Activated T-helper 1 cell treated with anti-CD3 and anti-CD28 coated beads, Interleukin-12 subunit alpha, Interleukin-12 subunit beta, Interleukin-2, Interleukin-4 antibody, amounts not matched to agents 30 ng/mL and 10 ng/mL and 1 ng/mL, durations not matched to agents 14 hours and 24 hours and 36 hours (primary cell): ENCODE measurements at regions of chr2 and their contacts with region 1.

Region 1: DNA sequence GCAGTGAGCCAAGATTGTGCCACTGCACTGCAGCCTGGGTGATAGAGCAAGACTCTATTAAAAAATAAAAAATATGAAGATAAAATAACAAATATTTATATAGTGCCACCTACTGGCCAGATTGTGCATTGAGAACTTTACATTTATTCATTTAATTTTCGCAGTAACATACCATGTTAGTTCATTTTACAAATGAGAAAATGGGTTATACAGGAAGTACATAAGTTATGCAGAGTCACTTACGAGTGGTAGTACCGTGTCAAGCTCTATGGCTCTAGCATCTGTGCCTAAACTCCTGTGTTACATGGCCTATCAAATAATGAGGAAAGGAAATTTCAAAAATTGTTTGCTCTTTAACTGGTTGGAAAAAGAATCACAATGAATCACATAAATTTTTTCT is 27.9 kb downstream of the RIF1 start:
- DNase-seq: no peak
- H3K4me3 Mint-ChIP-seq: no peak overlapping the region
- H3K27ac Mint-ChIP-seq: peak overlapping the region; percentile 29
- H3K4me1 Mint-ChIP-seq: peaks cover 19% of the 10 kb centered on the region
- H3K27me3 Mint-ChIP-seq: no peaks in the 10 kb centered on the region

Region 2: GRCh38 chr2:151261231-151261976 is 176.2 kb before region 1 on chr2 and contains the start of gene RBM43:
- intact Hi-C with region 1: loop called (anchors 2 kb)
- DNase-seq: peak; percentile 85
- H3K4me3 Mint-ChIP-seq: peak within 1 kb of the TSS; percentile 93
- H3K27ac Mint-ChIP-seq: peak within 1 kb of the TSS; percentile 98
- H3K4me1 Mint-ChIP-seq: peaks cover 18% of the 10 kb centered on the region
- H3K27me3 Mint-ChIP-seq: peaks cover 2% of the 10 kb centered on the region
- total RNA-seq, gene RBM43: 1.9 and 2.9 TPM in 2 replicates

Region 3: DNA sequence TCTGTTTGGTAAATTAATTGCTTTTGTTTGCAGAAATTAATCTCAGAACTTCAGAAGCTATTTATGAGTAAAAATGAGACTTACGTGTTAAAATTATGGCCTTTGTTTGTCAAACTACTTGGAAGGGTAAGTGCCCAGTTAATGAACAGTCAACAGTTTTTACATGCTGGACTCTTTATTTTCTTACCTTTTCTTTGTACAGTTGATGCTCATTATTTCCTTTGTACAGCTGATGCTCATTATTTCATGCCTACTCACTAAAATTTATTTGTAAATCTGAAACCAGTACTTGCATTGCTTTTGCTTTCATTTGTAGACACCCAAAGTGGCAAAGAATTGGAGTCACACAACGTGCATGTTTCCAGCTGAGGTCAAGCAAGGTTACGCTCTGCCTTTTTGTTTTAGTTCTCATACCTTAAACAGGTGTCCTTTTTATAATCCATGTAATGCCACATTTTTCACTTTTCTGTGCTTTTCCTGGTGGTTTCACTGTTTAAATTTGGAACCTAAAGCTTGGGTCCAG is 14.7 kb before region 1 on chr2:
- intact Hi-C with region 1: loop called (anchors 2 kb)
- DNase-seq: no peak
- H3K4me3 Mint-ChIP-seq: no peak overlapping the region
- H3K27ac Mint-ChIP-seq: peak overlapping the region; percentile 74
- H3K4me1 Mint-ChIP-seq: peaks cover 29% of the 10 kb centered on the region
- H3K27me3 Mint-ChIP-seq: no peaks in the 10 kb centered on the region

Region 4: GRCh38 chr2:152676461-152676860 is 1238.8 kb after region 1 on chr2:
- intact Hi-C with region 1: loop called (anchors 10 kb)
- DNase-seq: no peak
- H3K4me3 Mint-ChIP-seq: no peak overlapping the region
- H3K27ac Mint-ChIP-seq: no peak overlapping the region
- H3K4me1 Mint-ChIP-seq: peaks cover 9% of the 10 kb centered on the region
- H3K27me3 Mint-ChIP-seq: no peaks in the 10 kb centered on the region